Caco-2 (cell line): ENCODE measurements at regions of chr9 and their contacts with region 1.

Region 1: DNA sequence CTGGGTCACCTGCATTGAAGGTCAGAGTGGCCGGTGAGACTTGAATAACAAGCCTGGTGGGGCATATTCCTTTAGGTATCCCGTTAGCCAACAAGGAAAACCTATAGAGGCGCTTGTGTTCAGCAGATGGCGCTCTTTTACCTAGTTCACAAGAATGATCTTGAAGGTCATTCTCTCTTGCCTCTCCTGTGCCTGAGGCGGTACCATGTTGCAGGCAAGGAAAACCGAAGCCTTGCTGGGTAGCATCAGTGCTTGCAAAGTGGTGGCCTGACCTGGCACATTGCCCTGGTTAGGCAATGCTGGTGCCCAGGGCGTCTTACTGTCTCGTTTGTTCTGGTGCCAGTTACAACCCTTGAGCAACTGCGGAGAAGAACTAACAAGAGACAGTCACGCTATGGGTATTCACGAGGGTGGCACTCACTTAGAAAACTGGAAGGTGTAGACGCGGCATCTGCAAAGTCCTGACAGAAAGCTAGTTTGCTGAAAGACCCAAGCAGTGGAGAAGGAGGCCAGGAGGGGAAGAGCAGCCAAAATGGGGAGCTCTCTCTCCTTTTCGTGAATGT is 56.7 kb downstream of the AOPEP start:
- DNase-seq: peak; percentile 79 to 82
- H3K4me3 ChIP-seq: no peak overlapping the region
- H3K4me3 Mint-ChIP-seq: no peak overlapping the region
- H3K27ac Mint-ChIP-seq: no peak overlapping the region
- H3K4me1 ChIP-seq: peaks cover 8% of the 10 kb centered on the region; the same call in 1 of the 2 replicates
- H3K4me1 Mint-ChIP-seq: peaks cover 12% of the 10 kb centered on the region
- H3K27me3 ChIP-seq: no peaks in the 10 kb centered on the region; the same call in 1 of the 2 replicates
- H3K27me3 Mint-ChIP-seq: no peaks in the 10 kb centered on the region
- CTCF ChIP-seq: peak; percentile 71 to 76

Region 2: GRCh38 chr9:94554439-94555391 is 228.5 kb before region 1 on chr9 and contains the start of gene PCAT7:
- CTCF ChIA-PET with region 1: no interaction called
- POLR2A ChIA-PET with region 1: no interaction called
- intact Hi-C with region 1: loop called (anchors 5 kb)
- DNase-seq: peak; percentile 87 to 89
- H3K4me3 ChIP-seq: peak within 1 kb of the TSS; percentile 48
- H3K4me3 Mint-ChIP-seq: no peak within 1 kb of the TSS
- H3K27ac Mint-ChIP-seq: no peak within 1 kb of the TSS
- H3K4me1 ChIP-seq: 0 out of 2 replicates have a peak, but pooled peaks cover 3% of the 10 kb centered on the region
- H3K4me1 Mint-ChIP-seq: peaks cover 11% of the 10 kb centered on the region
- H3K27me3 ChIP-seq: no peaks in the 10 kb centered on the region
- H3K27me3 Mint-ChIP-seq: no peaks in the 10 kb centered on the region
- CTCF ChIP-seq: peak; percentile 67 to 78
- total RNA-seq, gene PCAT7: 10.4 and 10.6 TPM in 2 replicates

Region 3: GRCh38 chr9:94681508-94681907 is 101.7 kb before region 1 on chr9:
- CTCF ChIA-PET with region 1: interaction called, 5 read pairs
- POLR2A ChIA-PET with region 1: no interaction called
- intact Hi-C with region 1: loop called (anchors 1 kb)
- DNase-seq: peak; percentile 78 to 80
- H3K4me3 ChIP-seq: no peak overlapping the region
- H3K4me3 Mint-ChIP-seq: no peak overlapping the region
- H3K27ac Mint-ChIP-seq: peak overlapping the region; percentile 42
- H3K4me1 ChIP-seq: peaks cover 12% of the 10 kb centered on the region
- H3K4me1 Mint-ChIP-seq: peaks cover 15% of the 10 kb centered on the region
- H3K27me3 ChIP-seq: no peaks in the 10 kb centered on the region
- H3K27me3 Mint-ChIP-seq: no peaks in the 10 kb centered on the region
- CTCF ChIP-seq: peak; percentile 78 to 84

Region 4: DNA sequence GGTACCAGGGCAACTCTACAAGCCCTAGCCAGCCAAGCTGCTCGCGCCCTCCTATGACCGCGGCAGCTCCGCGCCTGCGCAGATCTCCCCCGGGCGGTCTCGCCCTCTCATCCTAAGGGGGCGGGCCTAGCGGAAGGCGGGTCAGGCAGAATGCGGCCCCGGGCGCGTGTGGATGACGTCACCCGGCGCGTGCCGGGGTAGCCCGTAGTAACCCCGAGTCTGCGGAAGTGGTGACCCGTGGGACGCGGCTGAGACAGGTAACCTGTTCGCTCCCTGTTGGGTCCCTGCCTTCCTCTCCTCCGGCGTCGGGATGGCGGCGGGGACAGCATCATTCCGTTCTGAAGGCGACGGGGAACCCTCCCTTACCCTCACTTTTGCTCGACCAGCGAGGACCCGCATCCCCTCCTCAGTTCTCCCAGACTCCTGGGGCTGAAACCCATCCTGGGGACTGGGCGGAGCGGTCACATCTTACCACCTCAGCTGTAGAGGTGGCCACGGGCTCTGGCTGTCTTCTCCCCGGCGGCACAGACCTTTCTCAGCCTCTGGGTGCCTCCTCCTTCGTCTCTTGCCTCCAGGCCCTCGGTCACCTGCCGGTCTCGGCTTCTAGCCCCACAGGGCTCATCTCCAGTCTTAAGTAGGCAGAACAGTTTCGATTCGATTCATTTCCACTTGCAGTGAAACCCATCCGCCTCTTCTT is 56.5 kb before region 1 on chr9 and contains the start of gene AOPEP:
- CTCF ChIA-PET with region 1: no interaction called
- POLR2A ChIA-PET with region 1: no interaction called
- intact Hi-C with region 1: no loop called
- DNase-seq: peak; percentile 98 to 99
- H3K4me3 ChIP-seq: peak within 1 kb of the TSS; percentile 72
- H3K4me3 Mint-ChIP-seq: peak within 1 kb of the TSS; percentile 98
- H3K27ac Mint-ChIP-seq: peak within 1 kb of the TSS; percentile 94
- H3K4me1 ChIP-seq: no peaks in the 10 kb centered on the region
- H3K4me1 Mint-ChIP-seq: peaks cover 5% of the 10 kb centered on the region
- H3K27me3 ChIP-seq: no peaks in the 10 kb centered on the region
- H3K27me3 Mint-ChIP-seq: no peaks in the 10 kb centered on the region
- CTCF ChIP-seq: no peak
- total RNA-seq, gene AOPEP: 61.7 and 63.3 TPM in 2 replicates

Region 5: GRCh38 chr9:94827584-94828304 is 44.6 kb after region 1 on chr9:
- CTCF ChIA-PET with region 1: no interaction called
- POLR2A ChIA-PET with region 1: no interaction called
- intact Hi-C with region 1: loop called (anchors 2 kb)
- DNase-seq: peak; percentile 82 to 84
- H3K4me3 ChIP-seq: no peak overlapping the region
- H3K4me3 Mint-ChIP-seq: peak overlapping the region; percentile 22
- H3K27ac Mint-ChIP-seq: peak overlapping the region; percentile 76
- H3K4me1 ChIP-seq: peaks cover 25% of the 10 kb centered on the region
- H3K4me1 Mint-ChIP-seq: peaks cover 47% of the 10 kb centered on the region
- H3K27me3 ChIP-seq: no peaks in the 10 kb centered on the region
- H3K27me3 Mint-ChIP-seq: no peaks in the 10 kb centered on the region
- CTCF ChIP-seq: no peak

Region 6: GRCh38 chr9:94922098-94922607 is 139.0 kb after region 1 on chr9:
- CTCF ChIA-PET with region 1: no interaction called
- POLR2A ChIA-PET with region 1: no interaction called
- intact Hi-C with region 1: loop called (anchors 10 kb)
- DNase-seq: peak in 1 of 2 experiments; percentile 46
- H3K4me3 ChIP-seq: no peak overlapping the region
- H3K4me3 Mint-ChIP-seq: peak overlapping the region; percentile 17
- H3K27ac Mint-ChIP-seq: peak overlapping the region; percentile 84
- H3K4me1 ChIP-seq: peaks cover 82% of the 10 kb centered on the region
- H3K4me1 Mint-ChIP-seq: peaks cover 69% of the 10 kb centered on the region
- H3K27me3 ChIP-seq: no peaks in the 10 kb centered on the region
- H3K27me3 Mint-ChIP-seq: no peaks in the 10 kb centered on the region
- CTCF ChIP-seq: no peak

Region 7: GRCh38 chr9:95073021-95073607 is 289.9 kb after region 1 on chr9:
- CTCF ChIA-PET with region 1: no interaction called
- POLR2A ChIA-PET with region 1: no interaction called
- intact Hi-C with region 1: loop called (anchors 10 kb)
- DNase-seq: peak in 1 of 2 experiments; percentile 48
- H3K4me3 ChIP-seq: no peak overlapping the region
- H3K4me3 Mint-ChIP-seq: no peak overlapping the region
- H3K27ac Mint-ChIP-seq: peak overlapping the region; percentile 66
- H3K4me1 ChIP-seq: peaks cover 23% of the 10 kb centered on the region
- H3K4me1 Mint-ChIP-seq: peaks cover 45% of the 10 kb centered on the region
- H3K27me3 ChIP-seq: no peaks in the 10 kb centered on the region
- H3K27me3 Mint-ChIP-seq: no peaks in the 10 kb centered on the region
- CTCF ChIP-seq: peak in 1 of 2 experiments; percentile 67